Ascending aorta (tissue), 2 donors: ENCODE measurements at regions of chr1 and their contacts with region 1.

Region 1: GRCh38 chr1:70221241-70222121 is at the start of gene SRSF11:
- DNase-seq: peak; percentile 80 to 97
- H3K4me3 ChIP-seq: peak within 1 kb of the TSS; percentile 69 to 88
- H3K27ac ChIP-seq: peak within 1 kb of the TSS; percentile 95 to 98
- H3K4me1 ChIP-seq: peaks cover 9 to 24% of the 10 kb centered on the region in 2 donors
- H3K27me3 ChIP-seq: no peaks in the 10 kb centered on the region
- CTCF ChIP-seq: no peak
- total RNA-seq, gene SRSF11: 81.0 TPM

Region 2: GRCh38 chr1:70205434-70206118 is 15.9 kb before region 1 on chr1 and contains the start of gene LRRC40:
- intact Hi-C with region 1: loop called (anchors 1 kb)
- DNase-seq: peak; percentile 88 to 97
- H3K4me3 ChIP-seq: peak within 1 kb of the TSS; percentile 72 to 82
- H3K27ac ChIP-seq: peak within 1 kb of the TSS; percentile 85 to 94
- H3K4me1 ChIP-seq: peaks cover 0 to 28% of the 10 kb centered on the region in 2 donors
- H3K27me3 ChIP-seq: no peaks in the 10 kb centered on the region
- CTCF ChIP-seq: no peak
- total RNA-seq, gene LRRC40: 10.6 TPM

Region 3: DNA sequence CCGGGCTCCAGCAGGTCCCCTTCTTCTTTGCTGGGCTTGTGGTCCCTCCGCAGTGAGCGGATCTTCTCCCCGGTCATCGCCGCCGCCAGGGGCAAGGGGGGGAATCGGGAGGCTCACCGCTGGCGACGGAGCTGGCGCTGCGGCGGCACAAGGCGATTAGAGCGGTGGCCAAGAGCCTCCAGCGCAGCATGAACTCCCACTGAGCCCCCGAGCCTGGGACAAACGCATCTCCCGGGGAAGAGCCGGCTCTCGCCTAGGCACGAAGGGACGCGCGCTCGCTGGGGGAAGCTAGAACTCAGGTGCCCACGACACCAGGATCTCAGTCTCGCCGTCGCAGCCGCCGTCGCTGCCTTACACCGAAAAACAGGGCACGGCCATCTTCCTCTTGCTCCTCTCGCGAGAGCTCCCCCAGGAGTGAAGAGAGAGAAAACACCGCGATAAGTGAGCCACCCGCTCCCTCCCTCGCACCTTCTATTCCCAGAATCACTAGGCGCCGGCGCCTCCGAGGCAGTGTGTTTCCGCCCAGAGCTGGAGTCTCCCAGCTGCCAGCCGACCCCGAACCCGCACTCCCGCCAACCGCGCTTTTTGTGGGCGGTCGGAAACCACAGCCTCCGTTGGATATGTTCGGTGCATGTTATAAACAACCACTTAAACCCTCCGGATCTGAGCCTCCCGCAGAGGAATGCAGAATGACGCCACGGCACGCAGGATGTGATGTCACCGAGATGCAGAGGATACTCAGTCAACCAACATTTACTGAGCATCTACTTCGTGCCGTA is 133.0 kb after region 1 on chr1 and contains the start of gene ANKRD13C:
- intact Hi-C with region 1: loop called (anchors 1 kb)
- DNase-seq: peak; percentile 86 to 98
- H3K4me3 ChIP-seq: peak within 1 kb of the TSS; percentile 82 to 92
- H3K27ac ChIP-seq: peak within 1 kb of the TSS; percentile 91 to 96
- H3K4me1 ChIP-seq: peaks cover 3 to 34% of the 10 kb centered on the region in 2 donors
- H3K27me3 ChIP-seq: no peaks in the 10 kb centered on the region
- CTCF ChIP-seq: no peak
- total RNA-seq, gene ANKRD13C: 30.2 TPM

Region 4: GRCh38 chr1:70410604-70411359 is 189.3 kb after region 1 on chr1 and contains the start of gene CTH:
- intact Hi-C with region 1: loop called (anchors 5 kb)
- DNase-seq: peak; percentile 91 to 98
- H3K4me3 ChIP-seq: peak within 1 kb of the TSS; percentile 73 to 91
- H3K27ac ChIP-seq: peak within 1 kb of the TSS; percentile 93 to 96
- H3K4me1 ChIP-seq: peaks cover 0 to 7% of the 10 kb centered on the region in 2 donors
- H3K27me3 ChIP-seq: no peaks in the 10 kb centered on the region
- CTCF ChIP-seq: no peak
- total RNA-seq, gene CTH: 4.3 TPM

Region 5: DNA sequence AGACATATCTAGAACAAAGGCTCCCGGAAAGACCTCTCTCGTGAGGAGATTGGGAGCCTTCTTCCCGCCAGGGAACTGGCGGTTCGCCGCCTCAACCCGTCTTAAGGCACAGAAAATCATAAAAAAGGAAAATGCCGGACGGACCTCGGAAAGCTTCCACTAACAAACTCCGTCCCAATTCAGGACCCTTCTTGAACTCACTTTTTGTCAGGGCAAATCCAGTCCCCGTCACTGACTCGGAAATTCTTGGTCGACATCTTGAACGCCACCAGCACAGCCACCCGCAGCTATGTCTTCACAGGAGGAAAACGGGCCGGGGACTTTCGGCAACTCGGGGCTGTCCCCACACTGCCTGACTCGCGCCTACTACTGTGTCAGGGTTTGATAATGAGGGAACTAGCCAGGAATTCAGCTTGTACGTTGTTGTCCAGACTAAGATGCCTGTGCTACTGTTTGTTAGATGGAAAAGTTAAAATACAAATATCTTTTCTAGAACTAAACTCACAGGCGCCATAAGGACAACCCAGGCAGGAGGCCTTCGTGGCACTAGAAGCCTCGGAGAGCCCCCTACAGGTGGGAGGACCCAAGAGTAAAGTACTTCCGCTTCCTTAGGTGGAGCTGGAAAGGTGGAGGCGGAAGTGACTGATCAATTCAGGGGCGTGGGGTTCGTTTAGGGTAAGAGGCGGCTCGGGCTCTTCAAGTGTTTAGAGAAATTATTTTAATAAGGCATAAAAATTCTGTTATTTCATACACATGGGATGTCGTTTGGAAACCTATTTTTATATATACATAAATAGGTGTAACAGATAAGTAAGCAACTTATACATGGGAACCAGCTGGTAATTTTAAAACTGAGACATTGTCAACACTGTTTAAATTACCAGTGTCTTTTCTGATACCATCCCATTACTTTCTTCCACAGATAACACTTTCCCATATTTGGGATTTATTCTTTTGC is 859.5 kb after region 1 on chr1 and contains the start of gene ZRANB2:
- intact Hi-C with region 1: loop called (anchors 5 kb)
- DNase-seq: peak; percentile 52 to 94
- H3K4me3 ChIP-seq: peak within 1 kb of the TSS; percentile 81 to 83
- H3K27ac ChIP-seq: peak within 1 kb of the TSS; percentile 77 to 88
- H3K4me1 ChIP-seq: peaks cover 9 to 22% of the 10 kb centered on the region in 2 donors
- H3K27me3 ChIP-seq: no peaks in the 10 kb centered on the region
- CTCF ChIP-seq: peak; percentile 35 to 75 (median 42)
- total RNA-seq, gene ZRANB2: 37.9 TPM